Kidney (tissue), 22 donors: ENCODE measurements at regions of chr11 and their contacts with region 1.

Region 1: GRCh38 chr11:70755410-70756161 is 357.3 kb downstream of the CTTN start:
- DNase-seq: peak; percentile 84 to 89 (median 87)
- H3K4me3 ChIP-seq: no peak overlapping the region
- H3K27ac ChIP-seq: no peak overlapping the region
- H3K4me1 ChIP-seq: peaks cover 0 to 8% (median 0%) of the 10 kb centered on the region in 3 donors
- H3K27me3 ChIP-seq: no peaks in the 10 kb centered on the region
- CTCF ChIP-seq: peak; percentile 93

Region 2: GRCh38 chr11:70471254-70471653 is 284.3 kb before region 1 on chr11:
- intact Hi-C with region 1: loop called (anchors 5 kb)
- DNase-seq: peak in 2 of 5 donors; percentile 33 to 39
- H3K4me3 ChIP-seq: no peak overlapping the region
- H3K27ac ChIP-seq: no peak overlapping the region
- H3K4me1 ChIP-seq: no peaks in the 10 kb centered on the region
- H3K27me3 ChIP-seq: no peaks in the 10 kb centered on the region
- CTCF ChIP-seq: no peak

Region 3: DNA sequence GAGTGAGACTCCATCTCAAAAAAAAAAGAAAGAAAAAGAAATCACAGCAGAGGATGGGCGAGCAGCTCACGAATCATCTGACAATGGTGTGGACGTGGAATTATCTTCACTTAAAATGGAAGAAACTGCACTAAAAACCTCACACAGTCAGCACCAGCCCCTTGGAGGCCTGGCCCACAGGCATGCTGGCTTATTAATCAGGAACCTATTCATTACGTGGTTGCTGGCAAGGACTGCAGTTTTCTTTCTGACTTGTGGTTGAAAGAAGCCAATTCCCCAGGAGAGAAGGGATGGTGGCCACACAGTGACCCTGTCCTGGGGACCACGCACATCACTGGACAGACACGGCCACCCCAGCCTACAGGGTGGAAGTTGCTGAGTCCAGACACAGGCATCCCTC is 43.8 kb after region 1 on chr11:
- intact Hi-C with region 1: no loop called
- DNase-seq: no peak
- H3K4me3 ChIP-seq: no peak overlapping the region
- H3K27ac ChIP-seq: no peak overlapping the region
- H3K4me1 ChIP-seq: no peaks in the 10 kb centered on the region
- H3K27me3 ChIP-seq: no peaks in the 10 kb centered on the region
- CTCF ChIP-seq: no peak